ENCODE measurements at regions of chr5 and their contacts with region 1.

Region 1: DNA sequence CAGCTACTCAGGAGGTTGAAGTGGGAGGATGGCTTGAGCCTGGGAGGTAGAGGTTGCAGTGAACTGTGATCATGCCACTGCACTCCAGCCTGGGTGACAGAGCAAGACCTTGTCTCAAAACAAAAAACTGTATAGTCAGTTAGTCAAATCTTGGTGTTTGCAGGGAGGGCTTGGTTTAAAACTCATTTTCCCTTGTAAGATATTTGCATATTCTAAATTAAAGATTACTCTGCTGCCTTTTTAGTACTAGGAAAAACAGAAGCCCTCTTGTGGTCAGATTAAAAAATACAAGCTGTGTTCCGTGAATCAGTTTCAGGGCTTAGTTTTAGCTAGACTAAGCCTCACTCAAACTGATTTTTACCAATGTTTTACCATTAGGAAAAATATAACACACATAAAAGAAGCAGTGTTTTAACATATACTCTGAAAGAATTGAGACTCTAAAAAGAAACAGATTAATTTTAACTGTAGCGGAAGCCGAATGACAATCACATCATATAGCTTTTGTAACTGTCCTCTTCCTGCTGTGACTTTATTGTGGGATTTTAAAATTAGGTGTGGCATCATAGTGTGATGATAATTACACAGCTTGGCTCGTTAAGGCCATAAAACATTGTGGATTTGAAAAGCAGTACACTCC is 84.9 kb upstream of the BASP1 start:
- DNase-seq: peak; percentile 63
- ATAC-seq: peak; percentile 50
- H3K4me3 ChIP-seq: no peak overlapping the region
- H3K27ac ChIP-seq: no peak overlapping the region
- H3K4me1 ChIP-seq: peaks cover 12% of the 10 kb centered on the region
- H3K27me3 ChIP-seq: no peaks in the 10 kb centered on the region
- CTCF ChIP-seq: peak; percentile 64
- POLR2A ChIP-seq: no peak
- RAD21 ChIP-seq: peak; percentile 69

Region 2: DNA sequence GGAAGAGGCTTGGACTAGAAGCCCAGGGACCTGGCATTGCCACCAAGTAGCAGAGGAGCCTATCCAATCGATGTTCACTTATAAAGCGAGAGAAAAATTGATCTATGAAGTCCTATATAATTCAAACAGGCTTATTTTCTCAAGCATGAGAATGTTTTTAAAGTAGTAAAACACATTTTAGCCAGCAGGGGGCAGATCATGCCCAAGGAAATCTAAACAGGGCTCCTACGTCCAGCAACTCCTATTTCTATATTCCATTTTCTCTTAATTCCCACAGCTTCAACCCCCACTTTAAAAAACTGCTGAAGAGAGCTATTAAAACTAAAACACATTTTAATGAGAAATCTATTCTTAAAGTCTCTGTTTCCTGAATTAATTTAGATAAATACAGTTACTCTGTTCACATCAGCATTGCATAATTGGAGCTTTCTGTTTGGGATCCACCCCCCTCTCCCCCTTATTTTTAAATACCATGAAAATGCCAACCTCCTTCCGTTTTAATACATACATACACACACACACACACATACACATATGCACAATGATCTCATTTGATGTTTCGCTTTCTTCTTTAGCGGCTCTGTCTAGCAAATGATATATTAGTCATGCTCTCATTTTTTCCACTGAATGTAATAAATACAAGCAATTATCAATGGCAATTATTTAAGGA is 341.4 kb before region 1 on chr5:
- CTCF ChIA-PET with region 1: interaction called, 4 read pairs
- POLR2A ChIA-PET with region 1: no interaction called
- dilution Hi-C with region 1: no loop called
- in situ Hi-C with region 1: no loop called
- intact Hi-C with region 1: loop called (anchors 2 kb)
- DNase-seq: peak; percentile 74
- ATAC-seq: peak; percentile 66
- H3K4me3 ChIP-seq: no peak overlapping the region
- H3K27ac ChIP-seq: no peak overlapping the region
- H3K4me1 ChIP-seq: peaks cover 13% of the 10 kb centered on the region
- H3K27me3 ChIP-seq: no peaks in the 10 kb centered on the region
- CTCF ChIP-seq: peak; percentile 71
- POLR2A ChIP-seq: no peak
- RAD21 ChIP-seq: peak; percentile 80

Region 3: DNA sequence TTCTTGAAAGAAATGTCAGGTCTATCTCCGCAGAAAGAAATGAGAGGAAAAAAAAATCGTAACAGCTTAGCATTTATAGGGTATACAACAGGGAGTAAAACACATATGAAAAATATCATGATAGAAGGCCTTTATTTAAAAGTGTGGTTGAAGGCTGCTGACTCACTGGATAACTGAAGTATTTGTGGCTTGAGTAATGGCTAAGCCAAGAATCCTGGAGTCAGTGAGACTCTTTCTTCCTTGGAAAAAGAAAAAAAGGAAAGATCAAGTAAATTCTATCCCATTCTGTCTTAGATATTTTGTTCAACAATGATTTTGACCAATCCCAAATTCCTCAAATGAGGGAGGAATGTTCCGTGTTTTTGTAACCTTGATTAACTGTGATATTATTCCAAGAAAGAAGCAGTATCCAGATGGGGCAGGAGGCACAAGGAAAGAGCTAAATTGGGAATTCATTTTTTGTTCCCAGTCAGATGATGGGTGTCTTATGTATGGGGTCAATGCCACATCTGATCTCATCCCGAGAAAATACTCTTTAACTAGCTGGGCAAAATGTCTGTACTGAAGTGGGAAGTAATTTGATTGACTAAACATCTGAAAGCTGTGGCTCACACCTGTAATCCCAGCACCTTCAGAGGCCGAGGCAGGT is 132.1 kb before region 1 on chr5:
- CTCF ChIA-PET with region 1: interaction called, 4 read pairs
- POLR2A ChIA-PET with region 1: no interaction called
- dilution Hi-C with region 1: no loop called
- in situ Hi-C with region 1: no loop called
- intact Hi-C with region 1: loop called (anchors 5 kb)
- DNase-seq: peak; percentile 98
- ATAC-seq: peak; percentile 94
- H3K4me3 ChIP-seq: no peak overlapping the region
- H3K27ac ChIP-seq: peak overlapping the region; percentile 95
- H3K4me1 ChIP-seq: peaks cover 12% of the 10 kb centered on the region
- H3K27me3 ChIP-seq: no peaks in the 10 kb centered on the region
- CTCF ChIP-seq: no peak
- POLR2A ChIP-seq: no peak
- RAD21 ChIP-seq: peak; percentile 12; the same call in 1 of the 2 replicates

Region 4: GRCh38 chr5:17024686-17025180 is 107.8 kb before region 1 on chr5:
- CTCF ChIA-PET with region 1: interaction called, 5 read pairs
- POLR2A ChIA-PET with region 1: no interaction called
- dilution Hi-C with region 1: no loop called
- in situ Hi-C with region 1: no loop called
- intact Hi-C with region 1: loop called (anchors 5 kb)
- DNase-seq: peak; percentile 85
- ATAC-seq: peak; percentile 76
- H3K4me3 ChIP-seq: no peak overlapping the region
- H3K27ac ChIP-seq: peak overlapping the region; percentile 90
- H3K4me1 ChIP-seq: peaks cover 17% of the 10 kb centered on the region
- H3K27me3 ChIP-seq: no peaks in the 10 kb centered on the region
- CTCF ChIP-seq: no peak
- POLR2A ChIP-seq: no peak
- RAD21 ChIP-seq: no peak

Region 5: DNA sequence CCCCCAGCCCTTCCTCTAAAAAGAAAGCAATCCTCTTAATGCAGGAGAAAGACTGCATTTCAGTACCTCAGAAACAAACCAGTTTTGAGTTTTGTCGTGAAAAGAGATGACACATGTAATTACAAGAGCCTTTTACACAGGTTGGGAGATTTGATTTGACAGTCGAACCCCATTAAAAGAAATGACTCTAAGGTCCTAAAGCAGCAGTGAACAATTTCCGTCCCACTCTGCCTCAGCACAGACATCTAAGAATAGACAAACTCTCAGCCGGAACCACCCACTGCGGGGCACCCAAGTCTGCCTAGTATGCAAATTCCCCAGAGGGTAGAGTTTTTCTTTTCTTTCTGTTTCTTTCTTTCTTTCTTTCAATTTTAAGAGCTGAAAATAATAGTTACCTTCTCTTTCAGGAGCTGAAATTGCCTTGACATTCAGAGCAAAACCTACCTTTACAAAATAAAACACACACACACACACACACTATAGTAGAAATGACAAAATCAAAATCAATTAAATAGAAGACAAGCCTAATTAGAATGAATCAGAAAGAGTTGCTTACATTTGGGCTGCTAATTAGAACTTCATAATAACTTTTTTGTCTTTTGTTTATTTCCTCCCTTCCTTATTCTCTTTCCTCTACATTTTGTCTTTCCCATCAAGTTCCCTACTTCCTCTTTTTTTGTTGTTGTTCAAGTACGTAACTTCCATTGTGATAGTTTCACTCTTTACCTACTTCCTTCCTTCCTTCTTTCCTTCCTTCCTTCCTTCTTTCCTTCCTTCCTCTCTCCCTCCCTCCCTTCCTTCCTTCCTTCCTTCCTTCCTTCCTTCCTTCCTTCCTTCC is 149.9 kb after region 1 on chr5:
- CTCF ChIA-PET with region 1: no interaction called
- POLR2A ChIA-PET with region 1: no interaction called
- dilution Hi-C with region 1: no loop called
- in situ Hi-C with region 1: no loop called
- intact Hi-C with region 1: no loop called
- DNase-seq: no peak
- ATAC-seq: no peak
- H3K4me3 ChIP-seq: no peak overlapping the region
- H3K27ac ChIP-seq: no peak overlapping the region
- H3K4me1 ChIP-seq: no peaks in the 10 kb centered on the region
- H3K27me3 ChIP-seq: no peaks in the 10 kb centered on the region
- CTCF ChIP-seq: no peak
- POLR2A ChIP-seq: no peak
- RAD21 ChIP-seq: no peak

Region 6: GRCh38 chr5:18314192-18314778 is 1181.7 kb after region 1 on chr5:
- CTCF ChIA-PET with region 1: no interaction called
- POLR2A ChIA-PET with region 1: no interaction called
- dilution Hi-C with region 1: no loop called
- in situ Hi-C with region 1: no loop called
- intact Hi-C with region 1: loop called (anchors 5 kb)
- DNase-seq: peak; percentile 20
- ATAC-seq: no peak
- H3K4me3 ChIP-seq: no peak overlapping the region
- H3K27ac ChIP-seq: no peak overlapping the region
- H3K4me1 ChIP-seq: no peaks in the 10 kb centered on the region
- H3K27me3 ChIP-seq: no peaks in the 10 kb centered on the region
- CTCF ChIP-seq: peak; percentile 48
- POLR2A ChIP-seq: no peak
- RAD21 ChIP-seq: peak; percentile 31; the same call in 1 of the 2 replicates